GM12878 (cell line): ENCODE measurements at regions of chr1 and their contacts with region 1.

Region 1: DNA sequence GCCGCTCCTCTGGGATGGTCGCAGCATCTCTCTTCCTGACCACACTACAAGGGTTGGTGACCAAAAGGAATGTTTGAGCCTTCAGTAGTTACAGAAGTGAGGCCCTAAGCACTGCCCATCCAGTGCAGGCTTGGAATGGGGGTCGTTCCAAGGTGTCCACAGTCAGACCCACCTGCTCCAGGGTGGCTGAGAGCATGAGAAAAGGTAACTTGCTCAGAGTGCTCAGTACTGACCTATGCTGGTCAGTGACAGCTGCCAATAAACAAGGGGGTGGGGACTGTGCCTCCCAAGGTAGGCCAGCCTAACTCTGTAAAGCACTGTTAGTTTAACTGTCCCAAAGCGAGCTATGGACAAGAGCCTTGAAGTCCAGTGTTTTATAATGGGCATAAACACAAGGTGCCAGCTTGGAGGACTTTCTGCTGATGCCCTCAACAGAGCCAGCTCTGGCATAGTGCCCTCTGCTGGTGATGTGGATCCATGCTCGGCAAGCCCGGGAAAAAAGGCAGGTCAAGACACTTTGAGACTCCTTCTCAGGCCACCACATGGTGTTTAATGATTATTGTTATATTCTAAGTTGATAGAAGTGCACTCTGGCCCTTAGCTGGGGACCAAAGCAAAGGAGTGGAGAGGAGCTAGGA is 78.1 kb upstream of the DNAH14 start:
- DNase-seq: peak; percentile 41
- ATAC-seq: peak; percentile 95
- H3K4me3 ChIP-seq: no peak overlapping the region
- H3K27ac ChIP-seq: no peak overlapping the region
- H3K4me1 ChIP-seq: no peaks in the 10 kb centered on the region
- H3K27me3 ChIP-seq: no peaks in the 10 kb centered on the region; a peak in 1 of 4 replicates
- CTCF ChIP-seq: peak; percentile 81 to 89 (median 87)
- EP300 ChIP-seq: no peak
- POLR2A ChIP-seq: no peak
- RAD21 ChIP-seq: peak; percentile 80

Region 2: GRCh38 chr1:224632381-224632871 is 218.9 kb before region 1 on chr1:
- CTCF ChIA-PET with region 1: interaction called, 207 read pairs
- POLR2A ChIA-PET with region 1: no interaction called
- RAD21 ChIA-PET with region 1: interaction called, 6 read pairs
- SMC1A ChIA-PET with region 1: interaction called, 147 read pairs
- in situ Hi-C with region 1: no loop called
- intact Hi-C with region 1: no loop called
- DNase-seq: no peak
- ATAC-seq: no peak
- H3K4me3 ChIP-seq: no peak overlapping the region
- H3K27ac ChIP-seq: no peak overlapping the region
- H3K4me1 ChIP-seq: no peaks in the 10 kb centered on the region
- H3K27me3 ChIP-seq: peaks cover 0 to 3% of the 10 kb centered on the region in 2 experiments; a peak in 1 of 4 replicates
- CTCF ChIP-seq: no peak
- EP300 ChIP-seq: no peak
- POLR2A ChIP-seq: no peak
- RAD21 ChIP-seq: no peak

Region 3: DNA sequence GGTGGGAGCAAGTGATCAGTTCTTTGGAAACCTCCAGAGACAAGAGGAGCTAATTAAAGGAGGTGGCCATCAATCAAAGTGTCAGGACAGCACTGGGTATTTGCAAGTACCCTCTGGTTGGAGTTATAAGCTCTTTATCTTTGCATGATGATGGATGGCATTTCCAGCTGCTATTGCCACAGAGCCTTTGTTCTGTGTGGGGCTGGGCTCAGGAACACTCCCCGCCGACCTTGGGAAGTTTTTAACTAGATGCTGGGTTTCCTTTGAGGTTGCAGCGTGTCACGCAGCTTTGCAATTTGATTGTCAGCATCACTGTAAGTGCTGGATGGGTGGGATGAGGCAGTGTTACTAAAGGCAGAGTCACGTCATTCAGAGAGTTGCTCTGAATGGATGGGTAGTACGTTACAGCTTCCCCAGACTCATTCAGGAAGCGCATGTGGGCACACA is 166.3 kb before region 1 on chr1:
- CTCF ChIA-PET with region 1: interaction called, 85 read pairs
- POLR2A ChIA-PET with region 1: no interaction called
- RAD21 ChIA-PET with region 1: interaction called, 3 read pairs
- SMC1A ChIA-PET with region 1: interaction called, 37 read pairs
- in situ Hi-C with region 1: no loop called
- intact Hi-C with region 1: no loop called
- DNase-seq: no peak
- ATAC-seq: peak; percentile 29; the same call in 2 of the 3 replicates
- H3K4me3 ChIP-seq: no peak overlapping the region
- H3K27ac ChIP-seq: no peak overlapping the region
- H3K4me1 ChIP-seq: no peaks in the 10 kb centered on the region
- H3K27me3 ChIP-seq: no peaks in the 10 kb centered on the region; a peak in 1 of 4 replicates
- CTCF ChIP-seq: no peak
- EP300 ChIP-seq: no peak
- POLR2A ChIP-seq: no peak
- RAD21 ChIP-seq: no peak

Region 4: DNA sequence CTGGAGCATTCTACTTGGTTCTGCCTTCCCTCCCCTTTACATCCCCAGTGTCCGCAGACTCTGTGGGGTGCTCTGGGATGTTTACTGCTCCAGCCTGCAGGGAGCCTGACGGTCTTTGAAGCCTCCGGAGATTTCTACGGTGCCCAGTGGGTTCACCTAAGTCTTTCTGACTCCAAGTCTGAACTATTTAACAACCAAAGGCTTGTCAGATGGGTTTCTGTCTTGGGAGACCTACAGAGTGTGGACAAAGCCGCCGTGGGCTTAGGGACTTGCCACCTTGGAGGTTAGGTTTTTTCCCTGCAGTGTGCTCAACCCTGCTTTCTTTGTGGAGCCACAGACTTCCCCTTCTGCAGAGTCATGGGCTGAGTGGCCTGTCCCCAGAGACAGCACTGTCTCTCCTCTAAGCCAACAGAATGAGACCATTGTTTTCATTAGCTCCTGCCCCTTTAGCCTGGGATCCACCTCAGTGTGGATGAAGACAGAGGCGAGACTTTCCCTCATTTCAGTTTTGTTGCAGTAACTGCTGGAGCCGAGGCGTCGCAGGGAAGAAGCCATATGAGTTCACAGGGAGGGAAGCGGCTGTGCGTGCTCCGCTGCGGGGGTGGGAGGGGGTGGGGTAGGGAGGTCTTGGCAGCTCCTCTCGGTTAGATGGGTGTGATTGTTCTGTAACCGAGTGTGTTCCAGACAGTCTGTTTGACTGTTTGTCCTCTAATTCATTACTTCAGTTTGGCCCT is 114.5 kb before region 1 on chr1:
- CTCF ChIA-PET with region 1: interaction called, 208 read pairs
- POLR2A ChIA-PET with region 1: interaction called, 19 read pairs
- RAD21 ChIA-PET with region 1: interaction called, 159 read pairs
- SMC1A ChIA-PET with region 1: interaction called, 202 read pairs
- in situ Hi-C with region 1: no loop called
- intact Hi-C with region 1: loop called (anchors 1 kb)
- DNase-seq: peak; percentile 93
- ATAC-seq: peak; percentile 61
- H3K4me3 ChIP-seq: no peak overlapping the region
- H3K27ac ChIP-seq: peak overlapping the region; percentile 49
- H3K4me1 ChIP-seq: peaks cover 77% of the 10 kb centered on the region
- H3K27me3 ChIP-seq: no peaks in the 10 kb centered on the region
- CTCF ChIP-seq: no peak
- EP300 ChIP-seq: peak; percentile 88 to 90; a peak in 3 of 4 replicates
- POLR2A ChIP-seq: no peak
- RAD21 ChIP-seq: no peak

Region 5: GRCh38 chr1:224783129-224783651 is 68.1 kb before region 1 on chr1:
- CTCF ChIA-PET with region 1: interaction called, 19 read pairs
- POLR2A ChIA-PET with region 1: no interaction called
- RAD21 ChIA-PET with region 1: interaction called, 13 read pairs
- SMC1A ChIA-PET with region 1: interaction called, 23 read pairs
- in situ Hi-C with region 1: no loop called
- intact Hi-C with region 1: loop called (anchors 5 kb)
- DNase-seq: peak; percentile 72
- ATAC-seq: peak; percentile 71
- H3K4me3 ChIP-seq: no peak overlapping the region
- H3K27ac ChIP-seq: peak overlapping the region; percentile 55
- H3K4me1 ChIP-seq: peaks cover 25% of the 10 kb centered on the region
- H3K27me3 ChIP-seq: no peaks in the 10 kb centered on the region
- CTCF ChIP-seq: no peak
- EP300 ChIP-seq: peak; percentile 47 to 60; a peak in 2 of 4 replicates
- POLR2A ChIP-seq: no peak
- RAD21 ChIP-seq: no peak

Region 6: DNA sequence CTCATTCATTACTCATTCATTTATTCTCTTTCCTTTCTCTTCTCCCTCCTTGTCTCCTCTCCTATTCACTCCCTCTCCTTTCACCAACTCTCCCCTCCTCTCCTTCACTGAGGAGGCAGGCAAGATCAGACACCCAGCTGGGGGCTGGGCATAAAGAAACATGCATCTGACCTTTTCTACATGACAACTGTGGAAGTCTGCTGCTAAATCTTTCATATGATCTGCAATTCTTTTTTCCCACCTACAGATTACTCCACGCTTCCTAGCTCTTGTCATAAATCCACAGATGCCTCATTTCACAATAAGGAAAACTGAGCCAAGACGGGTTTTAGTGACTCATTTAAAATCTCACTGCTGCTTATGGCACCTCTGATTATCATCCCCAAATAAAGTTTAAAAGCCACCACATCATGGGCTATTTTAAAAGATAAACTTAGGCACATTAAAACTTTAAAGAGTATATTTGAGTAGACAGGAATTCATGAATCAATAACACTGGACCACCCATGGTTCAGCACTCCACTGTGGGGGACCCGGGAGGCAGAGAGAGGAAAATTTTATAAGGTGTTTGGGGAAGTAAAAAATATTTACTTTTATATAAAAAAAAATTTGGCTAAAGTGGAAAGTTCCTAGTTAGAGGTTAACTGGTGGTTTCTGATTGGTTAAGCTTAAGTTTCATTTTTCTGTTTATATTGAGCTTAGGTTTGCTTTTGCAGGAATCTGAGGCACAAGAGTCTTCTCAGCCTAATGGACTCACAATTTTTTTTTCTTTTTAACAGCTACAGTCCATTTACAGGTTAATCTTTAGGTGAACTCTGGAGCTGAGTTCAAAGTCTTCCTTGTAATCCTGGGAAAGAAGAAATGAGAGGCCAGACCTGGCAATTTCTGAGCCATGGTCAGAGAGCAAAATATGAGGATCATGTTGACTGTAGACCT is 22.4 kb after region 1 on chr1:
- CTCF ChIA-PET with region 1: interaction called, 13 read pairs
- POLR2A ChIA-PET with region 1: no interaction called
- RAD21 ChIA-PET with region 1: interaction called, 7 read pairs
- SMC1A ChIA-PET with region 1: interaction called, 11 read pairs
- in situ Hi-C with region 1: no loop called
- intact Hi-C with region 1: no loop called
- DNase-seq: no peak
- ATAC-seq: no peak
- H3K4me3 ChIP-seq: no peak overlapping the region
- H3K27ac ChIP-seq: no peak overlapping the region
- H3K4me1 ChIP-seq: no peaks in the 10 kb centered on the region
- H3K27me3 ChIP-seq: no peaks in the 10 kb centered on the region; a peak in 1 of 4 replicates
- CTCF ChIP-seq: no peak
- EP300 ChIP-seq: no peak
- POLR2A ChIP-seq: no peak
- RAD21 ChIP-seq: no peak